ENCODE measurements at regions of chr9 and their contacts with region 1.

Region 1: GRCh38 chr9:4375424-4376200 is 75.7 kb upstream of the GLIS3 start:
- DNase-seq: peak; percentile 69
- ATAC-seq: peak; percentile 84
- H3K4me3 ChIP-seq: no peak overlapping the region
- H3K27ac ChIP-seq: peak overlapping the region; percentile 58
- H3K4me1 ChIP-seq: peaks cover 17% of the 10 kb centered on the region; the same call in 1 of the 2 replicates
- H3K27me3 ChIP-seq: no peaks in the 10 kb centered on the region
- CTCF ChIP-seq: peak; percentile 73

Region 2: DNA sequence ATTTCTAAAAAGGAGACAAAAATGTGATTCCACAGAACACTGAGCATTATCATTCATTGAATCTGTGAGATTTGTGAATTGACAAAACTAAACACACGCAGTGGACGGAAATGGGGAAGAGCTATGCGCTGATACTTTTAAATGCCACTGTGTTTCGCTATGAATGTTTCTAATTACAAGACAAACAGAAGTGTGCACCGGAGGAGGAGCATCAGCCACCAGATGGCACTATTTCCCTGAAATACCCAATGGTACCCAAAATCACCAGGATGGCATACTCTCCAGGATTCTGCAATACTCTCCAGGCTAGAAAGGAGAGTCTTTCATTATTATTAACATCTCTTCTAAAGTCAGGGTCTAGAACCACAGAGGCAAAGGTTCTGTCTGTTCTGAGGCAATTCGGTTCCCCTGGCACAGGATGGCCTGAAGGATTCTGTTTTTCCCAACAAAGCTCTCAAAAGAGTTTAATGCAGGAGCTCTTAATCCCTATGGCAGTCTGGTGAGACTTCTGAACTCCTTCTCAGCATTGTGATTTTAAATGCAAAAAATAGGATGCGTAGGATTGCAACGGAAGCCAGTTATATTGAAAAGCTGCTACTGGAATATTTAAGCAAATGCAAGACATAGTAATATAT is 1517.9 kb before region 1 on chr9:
- CTCF ChIA-PET with region 1: no interaction called
- POLR2A ChIA-PET with region 1: no interaction called
- intact Hi-C with region 1: loop called (anchors 1 kb)
- DNase-seq: peak; percentile 75
- ATAC-seq: peak; percentile 81
- H3K4me3 ChIP-seq: no peak overlapping the region
- H3K27ac ChIP-seq: no peak overlapping the region
- H3K4me1 ChIP-seq: no peaks in the 10 kb centered on the region
- H3K27me3 ChIP-seq: no peaks in the 10 kb centered on the region; the same call in 1 of the 2 replicates
- CTCF ChIP-seq: peak; percentile 80

Region 3: DNA sequence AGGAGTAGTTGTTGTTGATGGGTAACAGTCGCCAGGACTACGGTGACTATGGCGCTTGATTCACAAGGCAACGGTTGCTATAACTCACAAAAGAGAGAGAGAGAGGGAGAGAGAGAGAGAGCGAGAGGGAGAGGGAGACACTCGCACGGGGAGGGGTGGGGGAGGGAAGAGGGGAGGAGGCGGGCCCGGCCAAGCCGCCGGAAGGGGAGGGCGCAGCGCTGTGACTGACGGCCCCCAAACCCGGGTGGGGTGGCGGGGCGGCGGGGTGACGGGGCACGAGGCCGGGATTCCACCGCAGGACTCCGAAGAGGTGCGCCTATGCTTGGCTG is 849.8 kb before region 1 on chr9 and contains the start of gene RFX3:
- CTCF ChIA-PET with region 1: no interaction called
- POLR2A ChIA-PET with region 1: no interaction called
- intact Hi-C with region 1: loop called (anchors 5 kb)
- DNase-seq: peak; percentile 79
- ATAC-seq: peak; percentile 66
- H3K4me3 ChIP-seq: peak within 1 kb of the TSS; percentile 82
- H3K27ac ChIP-seq: peak within 1 kb of the TSS; percentile 100
- H3K4me1 ChIP-seq: peaks cover 11% of the 10 kb centered on the region; the same call in 1 of the 2 replicates
- H3K27me3 ChIP-seq: no peaks in the 10 kb centered on the region
- CTCF ChIP-seq: no peak
- total RNA-seq, gene RFX3: 2.3 and 4.5 TPM in 2 replicates

Region 4: DNA sequence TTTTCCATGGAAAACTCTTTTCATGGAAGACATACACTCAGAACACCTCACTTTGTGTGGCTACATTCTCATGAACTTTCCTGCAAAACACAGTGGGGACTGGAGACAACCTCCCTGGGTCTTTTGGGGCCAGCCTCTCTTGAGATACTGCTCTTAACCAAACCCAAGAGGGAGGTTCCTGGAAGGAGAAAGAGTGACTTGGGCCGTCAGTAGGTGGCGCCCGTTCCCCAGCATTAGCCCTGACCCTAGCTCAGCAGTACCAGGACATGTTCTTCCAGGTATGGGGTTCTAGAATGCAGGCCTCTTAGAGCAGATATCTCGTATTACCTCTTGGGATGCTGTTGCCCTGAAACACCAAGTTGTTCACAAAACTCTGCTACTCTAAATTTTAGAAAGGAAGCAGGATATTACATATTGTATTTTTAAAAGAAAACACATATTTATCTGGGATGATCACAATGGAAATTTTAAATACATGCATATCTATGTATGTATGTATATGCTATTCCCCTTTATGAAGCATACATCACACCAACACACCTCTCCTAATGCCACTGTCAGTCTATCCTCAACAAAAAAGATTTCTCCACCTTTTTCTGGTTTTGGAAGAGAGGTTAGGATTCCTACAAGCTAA is 59.9 kb before region 1 on chr9:
- CTCF ChIA-PET with region 1: no interaction called
- POLR2A ChIA-PET with region 1: interaction called, 3 read pairs
- intact Hi-C with region 1: loop called (anchors 2 kb)
- DNase-seq: peak; percentile 73
- ATAC-seq: peak; percentile 96
- H3K4me3 ChIP-seq: no peak overlapping the region
- H3K27ac ChIP-seq: no peak overlapping the region
- H3K4me1 ChIP-seq: no peaks in the 10 kb centered on the region
- H3K27me3 ChIP-seq: no peaks in the 10 kb centered on the region
- CTCF ChIP-seq: peak; percentile 80

Region 5: DNA sequence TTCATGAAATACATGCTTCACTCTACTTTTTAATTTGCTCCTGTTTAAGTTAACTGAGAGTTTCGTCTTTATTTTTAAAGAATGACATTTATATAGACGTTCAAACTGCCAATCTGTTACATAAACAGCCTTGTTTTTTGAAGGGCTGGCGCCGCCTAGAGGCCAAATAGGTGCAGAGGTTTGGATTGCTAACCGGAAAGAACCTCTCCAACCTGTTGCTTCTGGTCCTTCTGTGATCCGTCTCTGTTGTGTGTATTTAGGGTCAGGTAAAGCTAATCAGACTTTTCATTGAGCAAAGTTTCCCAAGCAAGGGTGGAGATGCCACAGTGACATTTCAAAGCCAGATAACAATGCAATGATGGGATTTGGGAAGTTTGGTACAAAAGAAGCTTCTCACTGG is 36.3 kb before region 1 on chr9:
- CTCF ChIA-PET with region 1: no interaction called
- POLR2A ChIA-PET with region 1: no interaction called
- intact Hi-C with region 1: loop called (anchors 1 kb)
- DNase-seq: peak; percentile 87
- ATAC-seq: peak; percentile 76
- H3K4me3 ChIP-seq: no peak overlapping the region
- H3K27ac ChIP-seq: no peak overlapping the region
- H3K4me1 ChIP-seq: no peaks in the 10 kb centered on the region
- H3K27me3 ChIP-seq: no peaks in the 10 kb centered on the region
- CTCF ChIP-seq: peak; percentile 89

Region 6: GRCh38 chr9:4349816-4350418 is 25.7 kb before region 1 on chr9:
- CTCF ChIA-PET with region 1: no interaction called
- POLR2A ChIA-PET with region 1: no interaction called
- intact Hi-C with region 1: no loop called
- DNase-seq: no peak
- ATAC-seq: no peak
- H3K4me3 ChIP-seq: no peak overlapping the region
- H3K27ac ChIP-seq: no peak overlapping the region
- H3K4me1 ChIP-seq: peaks cover 8% of the 10 kb centered on the region
- H3K27me3 ChIP-seq: no peaks in the 10 kb centered on the region
- CTCF ChIP-seq: no peak

Measured in PC-3 (cell line).